Head of caudate nucleus (tissue), 42 donors: ENCODE measurements at regions of chr10 and their contacts with region 1.

Region 1: DNA sequence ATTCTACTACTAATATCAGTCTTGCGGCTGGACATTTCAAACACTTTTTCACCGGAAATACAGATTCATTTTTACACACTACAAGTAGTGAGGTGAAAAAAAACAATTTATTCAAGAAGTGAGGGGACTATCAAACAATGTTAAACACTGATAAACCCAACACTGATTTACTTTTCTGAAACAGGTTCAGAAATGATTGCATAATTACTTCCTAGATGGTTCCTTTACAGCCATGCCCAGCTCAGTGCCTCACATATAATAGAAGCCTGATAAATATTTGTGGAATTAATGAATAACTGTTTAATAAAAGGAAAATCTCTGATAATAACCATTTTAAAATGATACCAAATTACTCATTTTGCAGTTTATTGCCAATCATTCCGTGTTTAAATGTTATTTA is 34.6 kb downstream of the FRA10AC1 start:
- DNase-seq: no peak

Region 2: DNA sequence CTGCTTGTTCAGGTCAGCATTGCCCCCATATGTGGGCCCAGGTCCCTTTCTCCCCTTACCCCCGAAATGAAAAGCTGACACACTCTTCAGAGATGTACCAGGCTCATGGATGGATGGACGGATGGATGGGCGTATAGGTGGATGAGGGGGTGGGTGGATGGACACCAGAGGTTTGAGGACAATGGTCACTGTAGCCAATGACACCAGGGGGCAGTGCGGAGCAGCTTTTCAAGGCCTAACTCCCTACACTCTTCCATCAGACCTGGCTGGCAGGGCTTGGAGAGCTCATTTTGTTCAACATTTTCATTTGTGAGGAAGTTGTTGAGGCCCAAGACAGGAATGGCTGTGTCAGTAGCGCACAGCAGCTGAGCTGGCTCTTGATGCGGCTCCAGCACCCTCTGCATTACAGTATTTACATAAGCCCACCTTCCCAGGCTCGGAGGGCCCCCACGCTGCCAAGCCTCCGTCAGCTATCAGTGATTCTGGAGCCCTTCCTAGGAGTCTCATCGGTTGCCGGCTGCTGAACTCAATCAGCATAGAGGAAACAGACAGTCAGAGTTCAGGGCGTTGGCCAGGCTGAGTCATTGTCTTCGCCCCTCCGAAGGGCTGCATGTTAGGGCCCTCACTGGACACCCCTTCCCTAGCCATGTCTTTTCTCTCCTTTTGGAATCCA is 112.9 kb before region 1 on chr10:
- intact Hi-C with region 1: loop called (anchors 10 kb)
- DNase-seq: peak; percentile 22 to 83 (median 64)

Region 3: DNA sequence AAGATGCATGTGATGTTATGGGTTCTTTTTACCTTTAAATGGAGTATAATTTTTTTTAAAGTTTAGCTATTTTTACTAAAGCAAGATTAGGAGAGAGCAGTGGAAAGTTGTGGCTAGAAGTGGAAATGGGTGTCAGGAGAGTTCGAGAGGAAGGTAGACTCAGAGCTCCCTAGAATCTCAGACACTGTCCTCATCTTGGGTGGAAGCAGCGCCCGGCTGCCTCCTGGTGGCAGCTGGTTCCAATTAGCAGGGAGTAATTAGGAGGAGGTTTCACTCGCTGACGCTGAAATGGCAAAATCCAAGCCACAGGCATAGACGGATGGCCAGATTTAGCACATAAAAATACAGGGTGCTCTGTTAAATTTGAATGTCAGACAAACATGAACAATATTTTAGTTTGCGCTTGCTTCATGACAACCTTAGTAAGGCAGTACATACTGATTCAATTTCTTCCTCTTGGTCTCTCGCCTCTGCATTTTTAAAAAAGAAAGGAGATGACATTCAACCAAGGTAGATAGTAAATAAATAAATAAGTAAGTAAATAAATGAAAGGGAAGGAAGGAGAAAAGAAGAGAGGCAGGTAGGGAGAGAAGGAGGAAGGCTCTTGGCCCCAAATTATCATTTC is 148.4 kb after region 1 on chr10:
- intact Hi-C with region 1: no loop called
- DNase-seq: peak; percentile 38 to 88 (median 75)

Region 4: GRCh38 chr10:93916257-93917063 is 248.7 kb after region 1 on chr10:
- intact Hi-C with region 1: no loop called
- DNase-seq: no peak